ENCODE measurements at regions of chr1 and their contacts with region 1.

Region 1: DNA sequence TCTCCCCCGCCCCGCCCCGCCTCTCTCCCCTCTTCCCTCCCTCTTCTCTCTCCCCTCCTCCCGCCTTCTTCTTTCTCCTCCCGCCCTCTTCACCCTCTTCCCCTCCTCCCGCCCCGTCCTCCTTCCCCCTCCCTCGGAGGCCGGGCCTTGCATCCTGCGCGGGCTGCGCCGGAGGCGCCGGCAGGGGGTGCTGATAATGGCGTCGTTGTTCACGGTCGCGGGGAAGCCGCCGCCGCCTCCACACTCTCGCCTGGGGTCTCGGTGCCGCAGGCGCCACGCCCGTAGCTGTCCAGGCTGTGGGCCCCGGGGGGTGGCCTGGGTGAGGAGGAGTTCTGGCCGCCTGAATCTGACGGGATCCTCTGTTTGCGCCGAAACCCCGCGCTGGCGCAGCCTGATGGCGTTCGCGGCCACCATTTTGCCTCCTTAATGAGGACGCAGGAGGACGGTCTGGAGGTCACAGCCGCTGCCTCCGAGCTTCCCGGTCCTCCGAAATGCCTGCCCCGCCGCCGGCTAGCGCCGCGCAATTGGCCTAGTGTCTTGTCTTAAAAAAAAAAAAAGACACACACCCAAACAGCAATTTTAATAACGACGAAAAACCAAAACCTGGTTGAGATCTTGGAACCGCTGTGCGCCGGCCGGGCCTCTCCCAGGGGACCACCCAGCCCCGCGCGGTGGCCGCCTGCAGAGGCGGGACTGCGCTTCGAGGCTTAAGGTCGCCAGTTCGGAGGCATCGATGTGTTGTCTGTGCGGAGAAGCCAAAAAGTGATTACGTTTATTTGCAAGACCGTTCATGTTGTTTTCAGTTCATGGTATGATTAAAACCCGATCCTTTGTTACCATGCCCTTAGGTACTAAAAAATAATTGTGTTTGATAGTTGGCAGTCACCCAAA is 106.6 kb upstream of the HNRNPU start:
- DNase-seq: peak; percentile 98

Region 2: DNA sequence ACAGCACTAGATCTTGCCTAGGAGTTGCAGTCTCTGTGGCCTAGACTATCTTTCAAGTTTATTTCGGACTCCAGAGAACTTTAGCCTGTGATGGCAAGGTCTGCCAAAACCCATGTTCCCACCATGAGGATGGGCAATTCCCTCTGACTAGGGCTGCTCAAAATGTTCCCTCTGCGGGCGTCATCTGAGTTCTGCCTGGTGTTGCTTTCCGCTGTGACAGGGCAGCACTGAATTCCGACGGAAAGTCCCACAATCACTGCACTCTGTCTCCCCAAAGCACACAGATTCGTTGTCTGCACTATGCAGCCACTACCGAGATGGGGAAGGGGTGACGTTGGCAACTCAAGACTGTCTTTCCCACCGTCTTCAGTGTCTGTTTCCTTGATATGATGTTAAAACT is 434.6 kb before region 1 on chr1:
- intact Hi-C with region 1: no loop called
- DNase-seq: no peak

Region 3: GRCh38 chr1:244864253-244865027 is 106.5 kb before region 1 on chr1 and contains the start of gene HNRNPU:
- intact Hi-C with region 1: loop called (anchors 10 kb)
- DNase-seq: peak; percentile 99
- total RNA-seq, gene HNRNPU: 186 to 214 TPM

Region 4: GRCh38 chr1:244941121-244941520 is 29.8 kb before region 1 on chr1:
- intact Hi-C with region 1: no loop called
- DNase-seq: no peak